CD8-positive, alpha-beta T cell (primary cell): ENCODE measurements at regions of chr9 and their contacts with region 1.

Region 1: DNA sequence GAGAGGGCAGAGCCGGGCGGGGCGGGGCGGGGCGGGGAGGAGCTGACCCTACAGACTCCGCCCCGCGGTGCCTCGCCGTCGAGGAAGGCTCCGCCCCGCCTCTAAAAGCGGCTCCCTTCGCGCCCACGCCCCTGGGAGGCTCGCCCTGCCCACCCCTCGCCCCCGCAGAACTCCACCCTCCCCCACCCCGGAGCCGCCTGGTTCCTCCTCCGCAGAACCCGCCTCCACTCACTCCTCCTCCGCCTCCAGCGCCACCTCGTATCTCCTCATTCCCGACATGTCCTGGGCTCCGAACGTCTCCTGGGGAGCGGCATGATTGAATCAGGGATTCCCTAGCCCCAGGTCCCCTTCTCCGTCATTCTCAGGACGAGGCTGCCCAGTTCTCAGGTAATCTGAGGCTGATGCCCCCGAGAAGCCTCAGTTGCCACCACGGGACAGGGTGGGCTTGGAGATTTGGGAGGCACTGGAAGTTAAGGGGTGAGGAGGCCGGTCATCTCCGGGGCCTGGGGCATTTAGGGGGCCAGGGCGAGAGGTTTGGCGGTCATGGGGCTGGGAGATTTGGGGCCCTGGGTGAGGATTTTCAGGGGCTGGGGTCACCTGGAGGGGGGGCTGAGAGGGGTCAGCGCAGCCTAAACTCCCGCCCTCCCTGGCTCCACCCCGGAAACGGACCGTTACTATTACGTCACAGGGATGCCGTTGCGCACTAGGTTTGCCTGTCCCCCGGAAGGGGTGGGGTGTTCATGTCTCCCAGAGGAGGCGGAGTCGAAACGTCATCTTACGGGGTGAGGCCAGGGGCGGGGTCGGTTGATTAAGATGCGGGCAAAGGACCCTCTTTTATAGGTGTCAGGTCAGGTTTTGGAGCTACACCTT is 3.2 kb upstream of the CCL27 start:
- DNase-seq: peak; percentile 75 to 96 (median 89)
- ATAC-seq: peak; percentile 83
- H3K4me3 ChIP-seq: peak overlapping the region; percentile 86 to 93
- H3K4me3 Mint-ChIP-seq: peak overlapping the region; percentile 92
- H3K27ac ChIP-seq: peak overlapping the region; percentile 96 to 99
- H3K27ac Mint-ChIP-seq: peak overlapping the region; percentile 97
- H3K4me1 ChIP-seq: peaks cover 37% of the 10 kb centered on the region
- H3K4me1 Mint-ChIP-seq: peaks cover 36% of the 10 kb centered on the region
- H3K27me3 ChIP-seq: no peaks in the 10 kb centered on the region
- H3K27me3 Mint-ChIP-seq: no peaks in the 10 kb centered on the region
- CTCF ChIP-seq: no peak

Region 2: DNA sequence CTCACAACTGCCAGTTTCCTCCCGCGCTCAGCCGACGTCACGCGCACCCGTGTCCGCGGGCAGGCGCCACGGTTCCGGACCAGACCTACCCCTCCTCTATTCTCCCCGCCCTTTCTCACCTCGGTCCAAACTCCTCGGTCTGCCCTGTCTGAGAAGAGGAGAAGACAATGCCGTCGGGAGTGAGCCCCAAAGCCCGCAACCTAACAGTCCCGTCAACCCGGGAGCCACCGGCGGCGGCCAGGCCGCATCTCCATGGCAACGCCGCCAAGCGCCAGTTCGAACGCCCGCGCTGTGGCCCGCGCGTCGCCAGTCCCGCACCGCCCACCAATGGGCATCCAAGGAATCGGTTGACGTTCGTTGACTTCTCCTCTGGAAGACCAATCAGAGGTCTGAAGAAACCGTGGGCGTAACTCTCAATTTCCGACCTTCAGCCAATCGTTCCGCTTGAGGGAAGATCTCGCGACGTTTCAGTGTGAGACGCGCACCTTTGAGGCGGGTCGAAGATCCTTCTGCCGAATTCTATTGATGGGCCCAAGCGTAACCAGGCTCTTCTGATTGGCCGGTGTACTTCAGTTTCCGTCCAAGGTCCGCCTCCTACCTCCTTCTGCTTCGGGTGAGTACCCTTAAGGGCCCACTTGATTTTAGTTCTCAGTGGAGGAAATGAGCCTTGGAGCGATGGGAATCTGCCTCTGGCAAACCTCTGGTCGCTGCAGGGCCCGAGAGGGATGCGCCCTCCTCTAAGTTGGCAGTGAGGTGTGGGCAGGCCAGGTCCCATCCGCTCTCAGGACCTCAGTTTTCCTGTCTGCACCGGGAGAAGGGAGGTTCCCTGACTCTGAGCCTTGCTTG is 336.4 kb before region 1 on chr9 and contains the starts of genes KIF24 and NUDT2:
- CTCF ChIA-PET with region 1: no interaction called
- POLR2A ChIA-PET with region 1: no interaction called
- intact Hi-C with region 1: loop called in 1 of 2 experiments (anchors 2 kb)
- DNase-seq: peak; percentile 86 to 100 (median 93)
- ATAC-seq: peak; percentile 91
- H3K4me3 ChIP-seq: peak within 1 kb of the TSS; percentile 95 to 96
- H3K4me3 Mint-ChIP-seq: peak within 1 kb of the TSS; percentile 90
- H3K27ac ChIP-seq: peak within 1 kb of the TSS; percentile 92 to 93
- H3K27ac Mint-ChIP-seq: peak within 1 kb of the TSS; percentile 92
- H3K4me1 ChIP-seq: no peaks in the 10 kb centered on the region
- H3K4me1 Mint-ChIP-seq: peaks cover 23% of the 10 kb centered on the region
- H3K27me3 ChIP-seq: no peaks in the 10 kb centered on the region
- H3K27me3 Mint-ChIP-seq: no peaks in the 10 kb centered on the region
- CTCF ChIP-seq: no peak
- total RNA-seq, gene KIF24: 0.08 to 0.14 TPM
- total RNA-seq, gene NUDT2: 9.7 to 10.2 TPM

Region 3: GRCh38 chr9:34637356-34638137 is 28.1 kb before region 1 on chr9 and contains the start of gene SIGMAR1:
- CTCF ChIA-PET with region 1: interaction called, 66 read pairs
- POLR2A ChIA-PET with region 1: interaction called, 10 read pairs
- intact Hi-C with region 1: loop called (anchors 1 kb)
- DNase-seq: peak; percentile 85 to 96 (median 93)
- ATAC-seq: peak; percentile 95
- H3K4me3 ChIP-seq: peak within 1 kb of the TSS; percentile 63 to 69
- H3K4me3 Mint-ChIP-seq: peak within 1 kb of the TSS; percentile 86
- H3K27ac ChIP-seq: peak within 1 kb of the TSS; percentile 55 to 86
- H3K27ac Mint-ChIP-seq: peak within 1 kb of the TSS; percentile 86
- H3K4me1 ChIP-seq: peaks cover 15% of the 10 kb centered on the region
- H3K4me1 Mint-ChIP-seq: peaks cover 36% of the 10 kb centered on the region
- H3K27me3 ChIP-seq: no peaks in the 10 kb centered on the region
- H3K27me3 Mint-ChIP-seq: no peaks in the 10 kb centered on the region
- CTCF ChIP-seq: no peak
- total RNA-seq, gene SIGMAR1: 8.5 to 9.6 TPM

Region 4: DNA sequence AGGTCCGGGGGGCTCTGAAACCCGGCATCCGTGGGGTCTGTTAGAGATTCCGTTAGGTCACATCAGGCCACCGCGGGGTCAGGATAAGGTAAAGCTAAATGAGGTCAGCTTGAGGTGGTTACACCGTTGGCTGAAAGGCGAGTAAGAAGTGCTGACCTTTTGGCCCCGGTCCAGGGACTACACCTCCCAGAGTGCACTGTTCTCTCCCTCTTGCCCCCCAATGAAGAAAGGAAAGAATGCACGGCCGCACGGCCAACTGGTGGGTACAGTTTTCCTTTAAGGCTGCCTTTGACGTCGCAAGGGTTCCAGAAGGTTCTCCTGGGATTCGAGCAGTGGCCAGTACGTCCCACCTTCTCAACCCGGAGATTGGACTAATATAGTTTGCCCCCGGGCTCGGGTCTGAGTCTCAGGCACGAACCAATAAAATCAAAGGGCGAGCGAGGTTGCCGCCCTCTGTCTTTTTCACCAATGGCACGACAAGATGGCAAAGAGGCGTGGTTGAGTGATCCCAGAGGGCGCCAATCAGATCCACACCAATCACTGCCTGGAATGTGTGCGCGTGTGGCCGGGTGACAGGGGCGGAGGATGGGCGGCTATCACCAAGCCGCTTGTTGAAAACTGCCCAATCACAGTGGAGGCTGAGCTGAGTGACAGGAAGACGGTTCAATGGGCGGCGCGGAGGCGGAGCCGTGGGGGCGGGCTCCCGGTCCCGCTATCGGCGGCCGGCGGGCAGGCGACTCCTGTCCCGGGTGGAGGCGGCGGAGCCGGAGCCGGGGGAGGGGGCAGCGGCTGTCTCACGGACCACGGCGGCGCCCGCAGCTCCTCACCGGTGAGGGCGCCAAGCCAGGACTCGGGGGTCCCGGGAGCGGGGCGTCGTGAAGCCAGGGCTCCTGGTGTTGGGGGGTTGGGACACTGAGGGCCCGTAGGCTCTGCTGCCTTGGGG is 323.7 kb after region 1 on chr9 and contains the start of gene DNAJB5:
- CTCF ChIA-PET with region 1: no interaction called
- POLR2A ChIA-PET with region 1: no interaction called
- intact Hi-C with region 1: loop called (anchors 1 to 5 kb)
- DNase-seq: peak; percentile 94 to 99 (median 96)
- ATAC-seq: peak; percentile 89
- H3K4me3 ChIP-seq: peak within 1 kb of the TSS; percentile 88 to 95
- H3K4me3 Mint-ChIP-seq: peak within 1 kb of the TSS; percentile 93
- H3K27ac ChIP-seq: peak within 1 kb of the TSS; percentile 42 to 77
- H3K27ac Mint-ChIP-seq: peak within 1 kb of the TSS; percentile 76
- H3K4me1 ChIP-seq: peaks cover 42% of the 10 kb centered on the region
- H3K4me1 Mint-ChIP-seq: peaks cover 46% of the 10 kb centered on the region
- H3K27me3 ChIP-seq: no peaks in the 10 kb centered on the region
- H3K27me3 Mint-ChIP-seq: no peaks in the 10 kb centered on the region
- CTCF ChIP-seq: no peak
- total RNA-seq, gene DNAJB5: 2.1 to 2.2 TPM

Region 5: DNA sequence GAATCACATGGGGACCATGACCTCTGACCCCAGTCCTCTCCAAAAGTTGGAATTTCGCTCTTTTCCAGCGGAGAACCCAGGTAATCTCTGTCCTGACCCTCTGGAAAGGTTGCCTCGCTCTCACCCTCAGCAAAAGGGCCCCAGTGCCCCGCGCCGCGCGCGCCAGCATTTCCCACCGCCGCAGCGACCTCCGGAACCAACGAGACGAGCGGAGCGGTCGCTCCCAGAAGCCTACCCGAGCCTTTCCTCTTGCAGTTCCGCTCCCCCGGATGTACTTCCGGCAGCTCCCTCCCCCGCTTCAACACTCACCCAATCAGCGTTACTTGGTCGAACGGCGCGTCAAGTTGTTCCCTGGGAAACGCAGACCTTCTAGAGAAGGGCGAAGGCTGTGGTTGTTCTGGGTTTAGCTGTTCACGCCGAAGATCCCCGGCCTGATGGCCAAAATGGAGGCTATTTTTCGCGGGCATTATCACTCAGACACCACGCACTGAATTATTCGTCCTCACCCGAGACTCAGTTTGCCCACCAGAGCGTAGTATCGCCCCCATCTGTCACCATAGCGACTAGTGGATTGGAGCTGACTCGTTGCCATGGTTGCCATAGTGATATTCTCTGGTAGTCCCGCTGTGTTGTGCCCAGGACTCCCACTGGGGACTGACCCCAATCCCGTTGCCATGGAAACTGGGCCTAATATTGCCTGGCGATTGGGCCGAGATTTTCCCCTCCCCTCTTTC is 437.5 kb after region 1 on chr9 and contains the start of gene STOML2:
- CTCF ChIA-PET with region 1: no interaction called
- POLR2A ChIA-PET with region 1: no interaction called
- intact Hi-C with region 1: loop called in 1 of 2 experiments (anchors 5 kb)
- DNase-seq: peak; percentile 83 to 97 (median 93)
- ATAC-seq: peak; percentile 96
- H3K4me3 ChIP-seq: peak within 1 kb of the TSS; percentile 78 to 95
- H3K4me3 Mint-ChIP-seq: peak within 1 kb of the TSS; percentile 89
- H3K27ac ChIP-seq: peak within 1 kb of the TSS; percentile 79 to 92
- H3K27ac Mint-ChIP-seq: peak within 1 kb of the TSS; percentile 90
- H3K4me1 ChIP-seq: peaks cover 14% of the 10 kb centered on the region
- H3K4me1 Mint-ChIP-seq: peaks cover 27% of the 10 kb centered on the region
- H3K27me3 ChIP-seq: no peaks in the 10 kb centered on the region
- H3K27me3 Mint-ChIP-seq: no peaks in the 10 kb centered on the region
- CTCF ChIP-seq: no peak
- total RNA-seq, gene STOML2: 30.5 to 31.3 TPM